Activated T-helper 2 cell treated with anti-CD3 and anti-CD28 coated beads, Interferon-gamma antibody, Interleukin-2, Interleukin-4, amounts not matched to agents 10 μg/mL and 5 μg/mL and 100 μg/mL, durations not matched to agents 14 hours and 24 hours and 36 hours (primary cell): ENCODE measurements at regions of chr12 and their contacts with region 1.

Region 1: GRCh38 chr12:75977952-75978671 is 53.5 kb downstream of the PHLDA1 start:
- DNase-seq: peak; percentile 82
- H3K4me3 Mint-ChIP-seq: peak overlapping the region; percentile 67
- H3K27ac Mint-ChIP-seq: peak overlapping the region; percentile 96
- H3K4me1 Mint-ChIP-seq: peaks cover 64% of the 10 kb centered on the region
- H3K27me3 Mint-ChIP-seq: no peaks in the 10 kb centered on the region

Region 2: GRCh38 chr12:75641031-75641780 is 336.9 kb before region 1 on chr12:
- intact Hi-C with region 1: loop called (anchors 1 kb)
- DNase-seq: peak; percentile 27
- H3K4me3 Mint-ChIP-seq: no peak overlapping the region
- H3K27ac Mint-ChIP-seq: peak overlapping the region; percentile 76
- H3K4me1 Mint-ChIP-seq: peaks cover 46% of the 10 kb centered on the region
- H3K27me3 Mint-ChIP-seq: peaks cover 12% of the 10 kb centered on the region

Region 3: DNA sequence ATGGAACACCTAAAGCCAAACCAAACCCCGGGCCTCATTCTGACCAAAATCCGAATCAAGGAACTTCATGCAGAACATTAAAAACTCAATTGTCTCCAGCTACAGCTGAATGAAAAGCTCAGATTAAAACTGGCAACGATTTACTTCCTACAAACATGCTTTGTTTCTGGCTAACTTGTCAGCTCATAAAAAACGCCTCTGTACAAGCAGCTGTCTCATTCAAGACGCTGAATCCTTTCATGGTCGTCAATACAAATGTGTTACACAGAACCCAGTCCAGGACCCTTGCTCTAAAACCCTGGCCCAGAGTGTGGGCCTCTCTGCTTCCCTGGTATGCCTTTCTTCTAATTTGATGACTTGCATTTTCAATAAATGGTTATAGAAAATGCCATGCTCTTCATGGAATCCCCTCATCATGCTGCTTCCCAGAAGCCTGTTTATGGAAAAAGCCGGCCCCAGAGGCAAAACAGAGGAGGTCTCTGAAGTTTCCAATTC is 129.6 kb before region 1 on chr12:
- intact Hi-C with region 1: no loop called
- DNase-seq: no peak
- H3K4me3 Mint-ChIP-seq: no peak overlapping the region
- H3K27ac Mint-ChIP-seq: no peak overlapping the region
- H3K4me1 Mint-ChIP-seq: no peaks in the 10 kb centered on the region
- H3K27me3 Mint-ChIP-seq: peaks cover 44% of the 10 kb centered on the region

Region 4: GRCh38 chr12:75900781-75901254 is 77.3 kb before region 1 on chr12:
- intact Hi-C with region 1: no loop called
- DNase-seq: no peak
- H3K4me3 Mint-ChIP-seq: no peak overlapping the region
- H3K27ac Mint-ChIP-seq: no peak overlapping the region
- H3K4me1 Mint-ChIP-seq: no peaks in the 10 kb centered on the region
- H3K27me3 Mint-ChIP-seq: peaks cover 26% of the 10 kb centered on the region

Region 5: DNA sequence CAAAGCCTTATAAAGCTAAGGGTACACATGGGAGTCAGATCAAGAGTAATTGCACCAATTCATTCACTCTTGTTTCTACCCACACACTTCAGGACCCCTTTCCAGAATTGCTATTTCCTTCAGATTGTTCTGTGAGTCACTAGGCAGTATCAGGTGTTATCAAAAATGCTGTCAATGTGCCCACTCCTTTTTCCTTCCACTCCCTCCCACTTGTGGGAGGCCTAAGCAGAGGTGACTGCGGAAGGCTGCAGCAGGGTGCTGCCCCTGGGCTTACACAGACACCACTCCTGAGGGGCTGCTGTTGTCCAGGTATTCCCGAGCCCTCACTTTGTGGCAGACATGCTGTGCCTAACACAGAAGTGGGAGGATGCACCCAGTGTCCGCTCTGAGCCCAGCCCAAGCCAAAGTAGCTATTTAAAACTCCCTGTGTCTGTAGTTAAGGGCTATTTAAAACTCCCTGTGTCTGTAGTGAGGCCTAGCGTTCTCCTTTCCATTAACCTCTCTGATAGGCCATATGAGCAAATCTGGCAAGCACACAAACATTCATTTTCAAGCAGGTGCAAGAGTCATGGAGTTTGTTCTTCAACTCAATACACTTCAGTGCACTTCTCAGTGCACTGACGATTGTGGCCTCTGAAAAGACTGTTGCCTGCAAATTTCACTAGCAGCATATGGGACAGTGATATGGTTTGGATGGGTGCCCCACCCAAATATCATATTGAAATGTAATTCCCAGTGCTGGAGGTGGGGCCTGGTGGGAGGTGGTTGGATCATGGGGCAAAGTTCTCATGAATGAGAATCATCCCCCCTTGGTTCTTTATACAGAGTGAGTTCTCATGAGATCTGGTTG is 64.4 kb before region 1 on chr12:
- intact Hi-C with region 1: loop called (anchors 1 kb)
- DNase-seq: no peak
- H3K4me3 Mint-ChIP-seq: no peak overlapping the region
- H3K27ac Mint-ChIP-seq: peak overlapping the region; percentile 40
- H3K4me1 Mint-ChIP-seq: peaks cover 27% of the 10 kb centered on the region
- H3K27me3 Mint-ChIP-seq: peaks cover 1% of the 10 kb centered on the region

Region 6: GRCh38 chr12:75944097-75944904 is 33.8 kb before region 1 on chr12:
- intact Hi-C with region 1: loop called (anchors 1 kb)
- DNase-seq: no peak
- H3K4me3 Mint-ChIP-seq: peak overlapping the region; percentile 52
- H3K27ac Mint-ChIP-seq: peak overlapping the region; percentile 97
- H3K4me1 Mint-ChIP-seq: peaks cover 32% of the 10 kb centered on the region
- H3K27me3 Mint-ChIP-seq: no peaks in the 10 kb centered on the region

Region 7: GRCh38 chr12:75994186-75994731 is 16.1 kb after region 1 on chr12:
- intact Hi-C with region 1: loop called (anchors 1 kb)
- DNase-seq: no peak
- H3K4me3 Mint-ChIP-seq: no peak overlapping the region
- H3K27ac Mint-ChIP-seq: peak overlapping the region; percentile 79
- H3K4me1 Mint-ChIP-seq: peaks cover 56% of the 10 kb centered on the region
- H3K27me3 Mint-ChIP-seq: no peaks in the 10 kb centered on the region

Region 8: DNA sequence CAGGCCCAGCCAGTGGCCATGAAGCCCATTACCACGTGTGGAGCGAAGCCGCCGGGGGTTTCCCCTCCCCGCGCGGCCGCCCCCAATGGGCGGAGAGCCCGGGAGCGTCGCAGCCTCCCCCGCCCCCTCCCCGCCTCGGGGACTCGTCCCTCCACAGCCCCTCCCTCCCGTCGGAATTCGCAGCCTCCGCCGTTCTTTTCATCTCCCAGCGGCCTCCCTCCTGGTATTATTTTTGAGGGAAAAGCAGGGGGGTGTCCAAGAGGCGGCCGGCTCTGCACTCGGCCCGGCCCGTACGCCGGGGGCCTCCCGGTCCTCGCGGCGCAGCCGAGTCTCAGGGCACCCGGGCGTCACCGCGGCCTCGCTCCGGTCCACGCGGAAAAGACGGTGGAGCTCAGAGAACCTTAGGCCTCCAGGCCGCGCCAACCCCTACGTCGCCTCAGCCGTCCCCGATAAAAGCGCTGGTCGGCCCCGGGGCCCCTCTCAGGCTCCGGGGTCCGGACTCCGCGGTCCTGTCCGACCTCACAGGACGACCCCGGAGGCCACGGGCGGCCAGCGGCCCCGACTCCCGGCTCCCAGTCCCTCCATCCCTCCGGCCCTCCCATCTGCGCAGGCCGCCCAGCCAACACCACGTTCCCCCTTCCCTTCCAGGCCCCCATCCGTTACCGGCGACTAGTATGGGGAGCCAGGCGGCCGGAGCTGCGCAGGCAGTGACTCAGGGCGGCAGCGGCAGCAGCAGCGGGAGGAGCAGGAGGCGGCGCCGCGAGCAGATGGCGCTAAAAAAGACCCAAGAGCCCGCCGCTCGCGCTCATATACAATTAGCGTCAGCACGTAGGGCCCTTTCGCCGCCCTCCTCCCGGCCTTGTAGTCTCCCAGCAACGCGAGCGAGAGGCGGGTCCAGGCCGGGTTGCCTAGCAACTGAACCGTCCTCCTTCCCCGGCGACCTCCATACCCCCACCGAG is 106.1 kb after region 1 on chr12 and contains the start of gene NAP1L1:
- intact Hi-C with region 1: loop called (anchors 1 kb)
- DNase-seq: peak; percentile 96
- H3K4me3 Mint-ChIP-seq: peak within 1 kb of the TSS; percentile 94
- H3K27ac Mint-ChIP-seq: peak within 1 kb of the TSS; percentile 99
- H3K4me1 Mint-ChIP-seq: peaks cover 44% of the 10 kb centered on the region
- H3K27me3 Mint-ChIP-seq: no peaks in the 10 kb centered on the region
- total RNA-seq, gene NAP1L1: 701 and 744 TPM in 2 replicates